Colonic mucosa (tissue), 4 donors: ENCODE measurements at regions of chr17 and their contacts with region 1.

Region 1: GRCh38 chr17:31869797-31870568 is 10.9 kb upstream of the COPRS start:
- DNase-seq: no peak
- H3K4me3 ChIP-seq: no peak overlapping the region
- H3K27ac ChIP-seq: no peak overlapping the region
- H3K4me1 ChIP-seq: no peaks in the 10 kb centered on the region
- H3K27me3 ChIP-seq: no peaks in the 10 kb centered on the region
- CTCF ChIP-seq: no peak

Region 2: GRCh38 chr17:31811101-31811500 is 58.9 kb before region 1 on chr17:
- intact Hi-C with region 1: no loop called
- DNase-seq: no peak
- H3K4me3 ChIP-seq: no peak overlapping the region
- H3K27ac ChIP-seq: no peak overlapping the region
- H3K4me1 ChIP-seq: no peaks in the 10 kb centered on the region
- H3K27me3 ChIP-seq: no peaks in the 10 kb centered on the region
- CTCF ChIP-seq: no peak

Region 3: DNA sequence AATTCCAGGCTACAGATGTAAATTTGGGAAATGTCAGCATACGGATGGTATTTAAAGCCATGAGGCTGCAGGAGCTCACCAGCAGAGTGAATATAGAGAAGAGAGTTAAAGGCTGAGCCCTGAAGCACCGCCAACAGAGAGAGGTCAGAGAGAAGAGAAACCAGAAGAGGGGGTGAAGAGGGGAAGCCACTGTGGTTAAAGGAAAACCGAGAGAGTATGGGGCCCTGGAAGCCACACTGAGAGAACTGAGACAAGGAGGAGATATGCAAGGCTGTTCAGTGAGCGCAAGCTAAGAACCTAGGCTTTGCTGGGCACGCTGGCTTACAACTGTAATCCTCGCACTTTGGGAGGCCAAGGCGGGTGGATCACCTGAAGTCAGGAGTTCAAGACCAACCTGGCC is 35.5 kb before region 1 on chr17:
- intact Hi-C with region 1: no loop called
- DNase-seq: no peak
- H3K4me3 ChIP-seq: no peak overlapping the region
- H3K27ac ChIP-seq: no peak overlapping the region
- H3K4me1 ChIP-seq: no peaks in the 10 kb centered on the region
- H3K27me3 ChIP-seq: no peaks in the 10 kb centered on the region
- CTCF ChIP-seq: no peak

Region 4: DNA sequence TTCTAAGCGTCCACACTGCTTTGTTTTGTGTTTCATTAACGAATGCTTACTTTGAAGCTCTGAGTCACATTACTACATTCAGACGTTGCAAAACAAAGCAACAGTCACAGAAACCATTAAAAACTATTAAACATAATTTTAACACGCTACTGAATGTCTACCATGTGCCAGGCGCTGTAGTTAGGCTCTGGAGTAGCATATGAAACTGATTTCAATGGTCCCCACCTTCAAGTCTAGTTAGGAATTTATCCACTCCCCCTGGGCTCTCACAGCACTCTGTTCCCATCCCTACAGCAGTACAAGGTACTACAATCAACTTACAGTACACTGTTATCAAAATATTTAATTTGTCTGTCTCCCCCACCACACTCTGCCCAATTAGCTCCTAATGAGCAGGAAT is 30.9 kb after region 1 on chr17:
- intact Hi-C with region 1: loop called (anchors 5 kb)
- DNase-seq: no peak
- H3K4me3 ChIP-seq: peak overlapping the region; percentile 59
- H3K27ac ChIP-seq: peak overlapping the region; percentile 48
- H3K4me1 ChIP-seq: peaks cover 6% of the 10 kb centered on the region
- H3K27me3 ChIP-seq: no peaks in the 10 kb centered on the region
- CTCF ChIP-seq: no peak

Region 5: DNA sequence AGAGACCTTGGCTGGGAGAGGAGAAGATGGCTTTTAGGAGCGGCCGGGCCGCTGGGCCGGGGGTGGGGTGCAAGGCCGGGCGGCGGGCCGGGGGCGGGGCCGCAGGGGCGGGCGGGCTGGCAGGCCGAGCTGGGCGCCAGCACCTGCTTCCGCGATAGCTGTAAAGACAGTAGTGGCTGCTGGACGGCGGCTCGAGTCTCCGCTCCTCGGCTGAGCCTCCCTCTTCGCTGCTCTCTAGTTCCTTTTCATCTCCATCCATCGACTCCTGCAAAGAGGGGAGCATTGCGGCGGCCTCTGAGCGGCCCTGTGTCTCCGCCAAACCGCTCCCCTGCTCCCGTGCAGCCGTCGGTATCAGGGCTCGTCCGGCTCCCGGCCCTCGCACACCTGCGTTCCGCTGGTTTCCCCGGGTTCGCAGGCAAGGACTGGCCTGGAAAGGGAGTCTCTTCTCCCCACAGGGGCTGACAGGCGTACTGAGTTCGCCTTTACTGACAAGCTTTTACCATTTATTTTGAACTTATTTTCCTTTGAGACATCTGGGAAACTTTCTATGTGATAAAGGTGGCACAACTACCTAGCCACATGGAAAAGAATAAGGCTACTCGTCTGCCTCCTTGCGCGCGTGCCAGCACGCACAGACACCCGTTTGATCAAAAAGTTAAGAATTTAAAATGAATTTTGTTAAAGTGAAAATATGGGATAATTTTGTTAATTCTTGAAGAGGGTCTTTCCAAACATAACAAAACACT is 472.0 kb after region 1 on chr17 and contains the start of gene C17orf75:
- intact Hi-C with region 1: no loop called
- DNase-seq: peak; percentile 81
- H3K4me3 ChIP-seq: peak within 1 kb of the TSS; percentile 49
- H3K27ac ChIP-seq: peak within 1 kb of the TSS; percentile 80
- H3K4me1 ChIP-seq: peaks cover 5% of the 10 kb centered on the region
- H3K27me3 ChIP-seq: no peaks in the 10 kb centered on the region
- CTCF ChIP-seq: no peak
- total RNA-seq, gene C17orf75: 12.5 to 13.4 TPM